Esophagus muscularis mucosa (tissue), 4 donors: ENCODE measurements at regions of chr5 and their contacts with region 1.

Region 1: GRCh38 chr5:58886315-58887207 is 303.7 kb downstream of the RAB3C start:
- DNase-seq: no peak
- H3K4me3 ChIP-seq: no peak overlapping the region
- H3K27ac ChIP-seq: peak overlapping the region in 1 of 4 donors; percentile 59
- H3K4me1 ChIP-seq: peaks cover 1 to 21% (median 11%) of the 10 kb centered on the region in 4 donors
- H3K27me3 ChIP-seq: no peaks in the 10 kb centered on the region
- CTCF ChIP-seq: peak; percentile 77 to 96 (median 89)
- EP300 ChIP-seq: no peak
- POLR2A ChIP-seq: no peak

Region 2: GRCh38 chr5:59007460-59008063 is 121.0 kb after region 1 on chr5:
- intact Hi-C with region 1: loop called (anchors 5 kb)
- DNase-seq: no peak
- H3K4me3 ChIP-seq: no peak overlapping the region
- H3K27ac ChIP-seq: no peak overlapping the region
- H3K4me1 ChIP-seq: peaks cover 8 to 36% (median 15%) of the 10 kb centered on the region in 4 donors
- H3K27me3 ChIP-seq: no peaks in the 10 kb centered on the region
- CTCF ChIP-seq: peak in 2 of 3 experiments; percentile 32 to 43
- EP300 ChIP-seq: no peak
- POLR2A ChIP-seq: no peak

Region 3: DNA sequence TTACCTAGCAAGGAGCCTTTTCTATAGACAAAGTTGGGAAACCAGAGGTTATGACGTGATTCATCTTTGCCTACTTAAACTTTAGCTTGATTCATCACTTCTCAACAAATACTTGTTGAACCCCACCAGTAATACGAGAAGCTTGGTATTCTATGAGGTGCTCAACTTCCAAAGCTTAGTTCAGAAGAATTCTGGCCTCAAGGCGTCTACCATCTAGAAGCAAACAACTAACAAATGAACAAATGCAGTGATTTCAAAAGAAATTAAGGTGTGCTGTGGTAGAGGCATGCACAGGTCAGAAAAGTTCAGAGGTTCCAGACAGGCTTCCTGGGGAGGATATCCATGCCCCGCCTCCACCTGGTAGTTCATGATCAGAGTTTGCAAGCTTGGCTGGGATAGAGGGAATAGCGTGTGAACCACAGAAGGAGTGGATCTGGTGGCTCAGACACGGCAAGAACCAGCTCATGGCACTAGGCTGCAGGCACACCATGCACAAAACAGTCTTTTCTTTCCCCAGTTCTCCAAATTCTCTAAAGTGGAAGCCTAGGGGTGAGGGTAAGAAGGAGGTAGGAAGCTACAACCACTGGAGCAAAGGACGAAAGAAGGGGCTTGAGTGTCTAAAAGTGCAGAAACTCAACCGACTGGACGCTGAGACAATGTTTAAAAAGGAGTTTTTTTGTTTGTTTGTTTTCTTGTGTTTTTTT is 169.3 kb after region 1 on chr5:
- intact Hi-C with region 1: no loop called
- DNase-seq: no peak
- H3K4me3 ChIP-seq: no peak overlapping the region
- H3K27ac ChIP-seq: no peak overlapping the region
- H3K4me1 ChIP-seq: no peaks in the 10 kb centered on the region
- H3K27me3 ChIP-seq: no peaks in the 10 kb centered on the region
- CTCF ChIP-seq: no peak
- EP300 ChIP-seq: no peak
- POLR2A ChIP-seq: no peak

Region 4: DNA sequence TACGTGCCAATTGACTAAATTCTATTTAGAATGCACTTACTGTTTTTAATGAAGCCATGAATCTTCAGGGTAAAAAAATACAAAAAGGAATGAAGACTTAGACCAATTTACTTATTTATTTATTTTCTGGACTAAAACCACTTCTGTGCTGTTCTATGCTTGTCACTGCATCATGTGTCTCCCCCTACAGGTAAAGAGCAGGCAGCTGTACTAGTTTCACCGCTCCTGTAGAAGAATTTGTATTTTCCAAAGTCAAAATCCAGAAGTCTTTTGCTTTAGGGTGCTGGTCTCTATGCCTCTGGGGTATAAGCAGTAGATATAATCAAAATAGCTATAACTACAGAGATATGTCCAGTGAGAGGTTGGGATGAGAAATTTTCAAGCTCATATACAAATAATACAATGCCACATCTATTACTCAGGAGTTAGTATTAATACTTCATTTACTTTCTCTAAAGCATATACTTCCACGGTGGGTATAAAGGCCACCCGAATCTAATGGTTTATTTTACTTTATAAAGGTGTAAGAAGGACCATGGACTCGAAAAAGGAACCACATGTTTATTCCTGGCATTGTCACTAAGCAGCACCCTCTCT is 287.8 kb after region 1 on chr5:
- intact Hi-C with region 1: loop called (anchors 2 kb)
- DNase-seq: no peak
- H3K4me3 ChIP-seq: no peak overlapping the region
- H3K27ac ChIP-seq: no peak overlapping the region
- H3K4me1 ChIP-seq: peaks cover 0 to 7% (median 4%) of the 10 kb centered on the region in 4 donors
- H3K27me3 ChIP-seq: no peaks in the 10 kb centered on the region
- CTCF ChIP-seq: peak; percentile 77 to 83 (median 77)
- EP300 ChIP-seq: no peak
- POLR2A ChIP-seq: no peak

Region 5: DNA sequence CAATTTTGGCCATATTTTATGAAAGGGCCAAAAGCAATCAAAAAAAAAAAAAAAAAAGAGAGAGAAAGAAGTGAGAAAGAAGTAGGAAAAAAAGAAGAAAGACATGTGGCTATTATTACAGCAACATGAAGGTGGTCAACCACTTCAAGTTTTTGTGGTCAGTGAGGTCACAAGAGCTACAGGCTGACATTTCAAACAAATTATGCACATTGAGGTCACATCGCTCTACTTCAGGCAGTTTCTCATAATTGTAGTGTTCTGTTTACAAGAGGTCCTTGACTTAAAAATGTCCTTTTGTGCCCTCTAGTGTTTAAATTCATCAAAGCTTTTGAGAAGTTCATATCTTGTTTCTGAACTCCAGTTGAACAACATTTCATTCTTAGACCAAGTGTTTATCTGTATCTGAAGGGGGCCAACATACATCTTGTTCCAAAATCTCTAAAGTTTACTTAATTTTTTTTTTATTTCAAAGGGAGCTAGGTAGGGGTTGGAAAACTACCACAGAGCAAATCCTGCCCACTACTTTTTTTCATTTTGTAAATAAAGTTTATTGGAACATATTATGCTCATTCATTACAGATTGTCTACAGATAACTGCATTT is 493.9 kb after region 1 on chr5:
- intact Hi-C with region 1: loop called (anchors 5 kb)
- DNase-seq: no peak
- H3K4me3 ChIP-seq: no peak overlapping the region
- H3K27ac ChIP-seq: no peak overlapping the region
- H3K4me1 ChIP-seq: peaks cover 0 to 2% (median 0%) of the 10 kb centered on the region in 4 donors
- H3K27me3 ChIP-seq: no peaks in the 10 kb centered on the region
- CTCF ChIP-seq: peak; percentile 55 to 66 (median 58)
- EP300 ChIP-seq: no peak
- POLR2A ChIP-seq: no peak